WTC11 (cell line): ENCODE measurements at regions of chr1 and their contacts with region 1.

Region 1: GRCh38 chr1:9292361-9293240 is at the start of gene SPSB1:
- DNase-seq: peak; percentile 60
- ATAC-seq: peak; percentile 71
- H3K4me3 Mint-ChIP-seq: peak within 1 kb of the TSS; percentile 70
- H3K27ac Mint-ChIP-seq: no peak within 1 kb of the TSS
- H3K4me1 Mint-ChIP-seq: peaks cover 12% of the 10 kb centered on the region
- H3K27me3 Mint-ChIP-seq: peaks cover 8% of the 10 kb centered on the region
- CTCF ChIP-seq: no peak
- total RNA-seq, gene SPSB1: 4.3 to 5.5 TPM (median 4.6 TPM) in 3 replicates

Region 2: DNA sequence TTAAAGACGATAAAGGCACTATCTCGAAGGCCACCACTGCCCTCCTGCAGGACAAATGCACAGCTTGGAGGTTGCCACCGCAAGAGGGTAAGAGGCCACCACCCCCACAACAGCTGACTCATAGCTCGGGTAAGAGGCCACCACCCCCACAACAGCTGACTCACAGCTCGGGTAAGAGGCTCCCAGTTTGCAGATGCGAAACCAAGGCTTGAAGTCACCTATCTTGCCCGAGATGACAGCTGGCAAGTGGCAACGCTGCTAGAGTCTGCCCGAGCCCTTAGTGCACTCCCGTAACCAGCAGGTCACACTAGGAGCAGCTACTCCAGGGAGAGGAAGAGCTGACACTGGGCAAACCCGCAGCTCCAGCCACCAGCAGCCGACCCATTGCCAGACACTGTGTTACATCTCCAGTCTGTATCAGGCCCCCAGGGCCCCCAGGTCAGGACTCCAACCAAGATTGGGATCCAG is 17.0 kb before region 1 on chr1:
- CTCF ChIA-PET with region 1: interaction called, 27 read pairs
- POLR2A ChIA-PET with region 1: no interaction called
- DNase-seq: no peak
- ATAC-seq: no peak
- H3K4me3 Mint-ChIP-seq: no peak overlapping the region
- H3K27ac Mint-ChIP-seq: no peak overlapping the region
- H3K4me1 Mint-ChIP-seq: peaks cover 28% of the 10 kb centered on the region
- H3K27me3 Mint-ChIP-seq: no peaks in the 10 kb centered on the region; the same call in 1 of the 2 replicates
- CTCF ChIP-seq: no peak

Region 3: DNA sequence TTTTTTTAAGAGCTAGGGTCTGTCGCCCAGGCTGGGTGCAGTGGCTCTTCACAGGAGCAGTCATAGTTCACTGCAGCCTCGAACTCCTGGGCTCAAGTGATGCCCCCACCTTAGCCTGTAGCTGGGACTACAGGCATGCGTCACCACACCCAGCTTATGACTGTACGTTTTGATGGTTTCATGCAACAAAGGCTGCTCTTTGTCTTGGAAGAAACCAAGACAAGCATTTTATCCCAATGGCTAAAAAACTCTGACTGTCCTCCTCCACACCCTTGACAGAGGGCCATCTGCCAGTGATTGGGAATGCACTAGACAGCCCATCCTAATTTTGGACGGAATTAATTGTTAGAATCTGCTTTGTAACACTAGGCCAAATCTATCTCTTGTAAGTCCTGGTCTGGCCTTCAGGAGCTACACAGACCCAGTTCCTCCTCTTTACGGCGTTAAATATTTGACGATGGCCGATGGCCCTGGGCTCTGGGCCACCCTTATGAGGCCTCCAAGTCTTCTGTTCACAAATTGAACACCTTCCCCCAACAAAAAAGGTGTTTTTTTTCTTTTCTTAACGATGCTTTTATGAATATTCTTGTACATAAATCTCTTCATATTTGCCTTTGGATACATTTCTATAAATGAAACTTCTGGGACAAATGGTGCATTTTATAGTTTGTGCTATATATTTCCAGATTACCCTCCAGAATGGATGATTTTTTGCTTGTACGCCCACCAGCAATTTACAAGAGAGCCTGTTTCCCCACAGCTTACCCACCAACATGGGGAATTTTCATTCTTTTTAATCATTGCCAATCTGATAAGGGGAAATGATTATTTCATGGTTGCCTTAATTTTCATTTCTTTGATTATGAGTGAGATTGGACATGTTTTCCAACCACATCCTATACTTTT is 141.9 kb after region 1 on chr1:
- CTCF ChIA-PET with region 1: interaction called, 15 read pairs
- POLR2A ChIA-PET with region 1: no interaction called
- DNase-seq: no peak
- ATAC-seq: no peak
- H3K4me3 Mint-ChIP-seq: no peak overlapping the region
- H3K27ac Mint-ChIP-seq: no peak overlapping the region
- H3K4me1 Mint-ChIP-seq: peaks cover 10% of the 10 kb centered on the region
- H3K27me3 Mint-ChIP-seq: no peaks in the 10 kb centered on the region; the same call in 1 of the 2 replicates
- CTCF ChIP-seq: no peak